Activated naive CD4-positive, alpha-beta T cell treated with anti-CD3 and anti-CD28 coated beads for 36 hours (primary cell): ENCODE measurements at regions of chr11 and their contacts with region 1.

Region 1: DNA sequence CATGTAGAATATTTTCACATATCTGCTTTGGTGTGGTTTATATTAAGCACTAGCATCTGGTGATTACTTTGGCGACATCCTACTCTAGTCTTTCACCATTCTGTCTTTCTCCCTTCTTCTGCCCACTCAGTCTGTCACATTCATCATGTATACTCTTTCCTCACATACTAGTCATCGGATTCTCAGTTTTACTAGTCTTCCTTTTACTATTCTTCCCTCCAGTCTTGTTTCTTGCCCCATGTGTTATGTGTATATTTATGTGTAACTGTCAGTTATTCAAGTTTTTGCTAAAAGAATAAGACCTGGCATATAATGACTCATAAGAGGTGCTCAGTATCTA is 4.6 kb upstream of the DIXDC1 start:
- DNase-seq: no peak
- H3K4me3 Mint-ChIP-seq: no peak overlapping the region
- H3K27ac Mint-ChIP-seq: peak overlapping the region; percentile 68
- H3K4me1 Mint-ChIP-seq: peaks cover 36% of the 10 kb centered on the region
- H3K27me3 Mint-ChIP-seq: no peaks in the 10 kb centered on the region

Region 2: DNA sequence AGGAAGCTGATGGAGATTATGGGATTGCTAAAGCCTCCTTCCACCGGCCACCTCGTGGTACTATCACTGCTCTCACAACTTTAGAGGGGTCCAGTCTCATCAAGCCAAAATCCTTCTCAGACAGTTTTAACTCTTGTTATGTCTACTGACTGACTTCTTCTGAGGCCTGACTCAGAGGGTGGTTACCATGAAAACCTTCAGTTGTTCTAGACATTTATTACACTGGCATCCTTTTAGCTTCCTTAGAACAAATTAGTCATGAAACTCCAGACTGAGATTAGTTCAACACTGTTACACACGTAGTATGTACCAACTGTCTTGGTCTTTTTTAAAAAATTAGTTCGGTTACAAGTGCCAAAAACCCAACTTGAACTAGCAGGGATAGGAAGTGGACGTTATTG is 12.1 kb after region 1 on chr11:
- CTCF ChIA-PET with region 1: interaction called, 8 read pairs
- intact Hi-C with region 1: loop called (anchors 1 kb)
- DNase-seq: no peak
- H3K4me3 Mint-ChIP-seq: no peak overlapping the region
- H3K27ac Mint-ChIP-seq: peak overlapping the region; percentile 82
- H3K4me1 Mint-ChIP-seq: peaks cover 22% of the 10 kb centered on the region
- H3K27me3 Mint-ChIP-seq: no peaks in the 10 kb centered on the region

Region 3: GRCh38 chr11:111974451-111974850 is 41.9 kb after region 1 on chr11:
- CTCF ChIA-PET with region 1: interaction called, 125 read pairs
- intact Hi-C with region 1: no loop called
- DNase-seq: no peak
- H3K4me3 Mint-ChIP-seq: no peak overlapping the region
- H3K27ac Mint-ChIP-seq: no peak overlapping the region
- H3K4me1 Mint-ChIP-seq: peaks cover 7% of the 10 kb centered on the region
- H3K27me3 Mint-ChIP-seq: peaks cover 23% of the 10 kb centered on the region

Region 4: GRCh38 chr11:111982019-111982464 is 49.5 kb after region 1 on chr11:
- CTCF ChIA-PET with region 1: interaction called, 125 read pairs
- intact Hi-C with region 1: loop called (anchors 1 kb)
- DNase-seq: peak; percentile 85
- H3K4me3 Mint-ChIP-seq: no peak overlapping the region
- H3K27ac Mint-ChIP-seq: no peak overlapping the region
- H3K4me1 Mint-ChIP-seq: peaks cover 12% of the 10 kb centered on the region
- H3K27me3 Mint-ChIP-seq: peaks cover 26% of the 10 kb centered on the region

Region 5: DNA sequence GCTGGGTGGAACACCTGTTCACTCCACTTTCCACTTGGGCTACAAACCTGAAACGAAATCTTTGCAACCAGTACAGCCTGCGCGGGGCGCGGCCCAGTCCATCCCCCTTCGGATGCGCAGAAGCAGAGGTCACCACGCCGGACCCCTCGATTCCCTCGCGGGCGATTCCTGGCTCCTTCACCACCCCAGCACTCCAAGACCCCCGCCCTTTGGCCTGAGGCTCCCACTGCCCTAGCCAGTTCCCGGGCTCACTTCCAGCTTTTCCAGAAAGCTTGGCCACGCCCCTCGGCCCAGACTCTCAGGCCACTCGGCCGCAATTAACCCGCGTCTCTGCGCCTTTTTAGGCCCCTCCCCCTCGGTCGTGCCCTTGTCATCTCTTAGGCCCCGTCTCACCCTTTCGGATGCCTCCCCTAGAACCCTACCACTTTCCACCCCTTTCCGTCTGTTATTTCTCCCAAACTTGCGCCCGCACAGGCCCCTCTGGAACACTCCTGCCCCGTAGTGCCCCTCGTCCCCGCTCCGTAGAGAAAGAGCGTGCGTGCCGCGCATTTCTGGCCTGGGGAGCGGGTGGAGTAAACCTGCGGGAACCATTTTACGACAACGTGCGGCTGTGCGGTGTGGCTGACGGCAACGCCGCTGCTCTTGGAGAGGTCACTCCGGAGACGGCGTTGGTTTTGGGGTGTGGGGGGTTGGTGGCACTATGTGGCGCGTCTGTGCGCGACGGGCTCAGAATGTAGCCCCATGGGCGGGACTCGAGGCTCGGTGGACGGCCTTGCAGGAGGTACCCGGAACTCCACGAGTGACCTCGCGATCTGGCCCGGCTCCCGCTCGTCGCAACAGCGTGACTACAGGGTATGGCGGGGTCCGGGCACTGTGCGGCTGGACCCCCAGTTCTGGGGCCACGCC is 92.4 kb after region 1 on chr11 and contains the start of gene DLAT:
- CTCF ChIA-PET with region 1: interaction called, 7 read pairs
- intact Hi-C with region 1: loop called (anchors 1 kb)
- DNase-seq: peak; percentile 89
- H3K4me3 Mint-ChIP-seq: peak within 1 kb of the TSS; percentile 100
- H3K27ac Mint-ChIP-seq: peak within 1 kb of the TSS; percentile 100
- H3K4me1 Mint-ChIP-seq: peaks cover 28% of the 10 kb centered on the region
- H3K27me3 Mint-ChIP-seq: no peaks in the 10 kb centered on the region
- total RNA-seq, gene DLAT: 34.2 to 36.8 TPM

Region 6: GRCh38 chr11:112174789-112175598 is 242.4 kb after region 1 on chr11 and contains the start of gene BCO2:
- CTCF ChIA-PET with region 1: interaction called, 3 read pairs
- intact Hi-C with region 1: loop called (anchors 1 kb)
- DNase-seq: peak; percentile 60
- H3K4me3 Mint-ChIP-seq: peak within 1 kb of the TSS; percentile 50
- H3K27ac Mint-ChIP-seq: no peak within 1 kb of the TSS
- H3K4me1 Mint-ChIP-seq: peaks cover 13% of the 10 kb centered on the region
- H3K27me3 Mint-ChIP-seq: peaks cover 22% of the 10 kb centered on the region
- total RNA-seq, gene BCO2: 0.30 to 0.45 TPM